ENCODE measurements at regions of chr5 and their contacts with region 1.

Region 1: DNA sequence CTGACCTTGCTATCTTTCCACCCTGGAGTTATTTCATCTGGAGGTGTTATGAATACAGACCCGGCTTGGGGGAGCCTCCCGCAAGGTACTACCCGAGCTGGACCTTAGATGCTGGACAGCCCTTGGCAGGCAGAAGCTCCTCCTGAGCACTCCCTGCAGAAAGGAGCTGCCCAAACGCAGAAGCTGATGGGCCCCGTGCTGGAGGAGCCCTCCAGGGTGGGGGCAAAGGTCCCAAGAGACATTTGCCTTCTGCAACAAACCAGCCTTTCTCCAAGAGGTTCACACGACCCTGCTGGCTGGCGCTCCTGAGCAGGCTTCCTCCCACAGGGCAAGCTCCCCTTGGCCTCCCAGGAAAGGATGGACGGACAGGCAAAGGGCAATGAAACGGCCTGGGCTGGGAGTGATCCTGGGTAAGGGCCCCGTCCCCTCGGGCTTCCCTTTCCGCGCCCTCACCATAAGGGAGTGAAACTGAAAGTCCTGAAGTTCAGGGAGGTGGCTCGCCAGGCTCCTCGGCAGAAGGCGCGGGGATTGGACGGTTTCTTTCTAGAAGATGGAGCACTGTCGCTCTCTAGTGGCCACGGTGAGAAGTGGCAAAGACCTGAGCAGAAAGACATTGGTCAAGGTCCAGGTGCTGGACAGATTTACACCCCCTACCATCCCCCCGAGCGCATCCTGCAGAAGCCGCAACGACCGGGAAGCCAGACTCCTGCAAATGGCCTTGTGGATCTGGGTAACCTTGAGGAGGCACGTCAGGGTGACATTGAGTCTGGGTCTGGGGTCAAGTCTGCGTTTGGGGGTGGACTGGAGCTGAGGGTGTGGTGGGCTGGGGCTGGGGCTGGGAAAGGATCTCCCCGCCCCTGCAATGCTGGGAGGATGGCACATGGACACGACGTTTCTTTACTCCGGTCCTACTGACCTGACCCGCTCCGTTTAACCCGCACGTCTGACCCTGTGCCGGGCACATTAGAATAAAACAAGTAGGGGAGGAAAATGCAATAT is 56.4 kb downstream of the NEURL1B start:
- DNase-seq: peak; percentile 94
- H3K4me3 Mint-ChIP-seq: peak overlapping the region; percentile 82
- H3K27ac Mint-ChIP-seq: peak overlapping the region; percentile 82
- H3K4me1 Mint-ChIP-seq: peaks cover 17% of the 10 kb centered on the region
- H3K27me3 Mint-ChIP-seq: peaks cover 14% of the 10 kb centered on the region
- CTCF ChIP-seq: peak; percentile 99

Region 2: DNA sequence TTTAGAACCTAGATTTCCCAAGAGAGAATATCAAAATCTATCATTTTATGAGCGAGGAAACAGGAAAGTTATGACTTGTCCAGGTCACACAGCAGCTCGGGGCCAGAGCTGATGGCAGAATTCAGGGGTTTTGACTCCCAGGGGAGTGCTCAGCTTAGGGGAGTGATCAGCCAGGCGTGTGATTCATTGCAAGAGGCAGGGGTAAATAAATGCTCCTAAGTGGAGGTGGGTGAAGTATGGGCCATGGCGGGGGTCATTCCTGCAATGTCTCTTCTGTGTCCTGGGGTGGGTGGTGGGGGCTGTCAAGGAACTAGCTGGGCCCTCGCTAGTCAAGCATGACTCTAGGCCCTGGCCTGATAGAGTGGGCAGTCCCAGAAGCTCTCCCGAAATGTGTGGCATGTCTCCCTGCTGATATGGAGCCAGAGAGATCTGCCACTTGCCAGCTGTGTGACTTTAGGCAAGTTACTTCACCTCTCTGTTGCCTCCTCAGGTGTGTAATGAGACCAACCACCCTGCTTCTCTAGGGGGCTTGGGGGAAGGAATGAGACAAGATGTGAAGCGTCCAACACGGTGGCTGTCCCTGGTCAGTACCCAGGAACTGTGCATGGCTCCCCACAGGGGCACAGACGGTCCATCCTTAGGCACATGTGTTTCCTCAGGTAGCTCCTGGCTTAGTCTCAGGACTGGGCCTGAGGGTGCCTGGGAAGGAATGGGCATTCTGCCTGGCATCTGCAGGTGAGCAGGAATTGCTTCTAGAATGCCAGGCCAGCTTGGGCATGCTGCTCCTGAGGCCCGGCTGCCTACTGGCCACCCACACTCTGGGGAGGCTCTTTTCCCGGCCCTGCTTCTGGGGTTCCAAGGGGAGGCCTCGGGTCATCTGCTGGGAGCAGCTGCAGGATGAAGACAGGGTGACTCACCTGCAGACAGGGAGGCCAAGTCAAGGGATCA is 206.6 kb before region 1 on chr5:
- CTCF ChIA-PET with region 1: interaction called, 22 read pairs
- POLR2A ChIA-PET with region 1: interaction called, 7 read pairs
- intact Hi-C with region 1: no loop called
- DNase-seq: peak; percentile 68
- H3K4me3 Mint-ChIP-seq: no peak overlapping the region
- H3K27ac Mint-ChIP-seq: no peak overlapping the region
- H3K4me1 Mint-ChIP-seq: no peaks in the 10 kb centered on the region
- H3K27me3 Mint-ChIP-seq: peaks cover 19% of the 10 kb centered on the region
- CTCF ChIP-seq: no peak

Region 3: DNA sequence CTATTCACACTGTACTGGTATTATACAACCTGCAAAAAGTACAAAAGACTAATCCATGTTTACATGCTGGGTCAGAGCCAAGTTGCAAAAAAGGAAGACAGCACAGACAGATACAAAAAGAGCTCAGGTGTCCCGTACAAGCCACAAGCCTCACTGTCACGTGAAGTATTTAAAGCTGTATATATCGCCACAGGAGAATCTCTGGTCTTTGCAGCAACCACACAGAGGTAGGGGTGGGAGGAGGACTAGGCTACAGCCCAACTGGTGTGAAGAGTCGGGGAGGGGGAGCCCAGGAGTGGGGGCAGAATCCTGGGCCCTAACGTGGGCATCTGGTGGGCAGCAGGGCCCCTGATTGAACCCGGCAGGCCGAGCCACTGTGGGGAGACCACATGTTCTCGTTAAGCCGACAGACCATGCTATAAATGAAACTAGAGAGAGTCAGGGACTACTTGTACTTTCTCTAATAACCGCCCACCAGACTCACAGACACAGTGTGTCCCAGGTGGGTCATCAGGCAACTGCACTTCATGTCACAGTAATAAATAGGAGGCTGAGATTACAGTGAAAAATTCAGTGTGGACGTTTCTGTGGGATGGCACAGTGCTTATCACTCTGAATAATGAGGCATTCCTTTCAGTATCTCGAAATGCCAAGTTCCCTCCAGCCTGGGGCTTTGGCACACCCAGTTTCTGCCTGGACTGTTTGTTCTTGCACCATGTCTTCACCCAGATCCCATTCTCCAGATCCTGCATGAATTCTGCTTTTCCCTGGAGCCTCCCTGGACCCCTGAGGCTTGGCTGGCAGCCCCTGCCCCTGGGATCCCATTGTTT is 163.8 kb before region 1 on chr5:
- CTCF ChIA-PET with region 1: interaction called, 16 read pairs
- POLR2A ChIA-PET with region 1: interaction called, 6 read pairs
- intact Hi-C with region 1: no loop called
- DNase-seq: peak; percentile 86
- H3K4me3 Mint-ChIP-seq: peak overlapping the region; percentile 60
- H3K27ac Mint-ChIP-seq: peak overlapping the region; percentile 93
- H3K4me1 Mint-ChIP-seq: peaks cover 27% of the 10 kb centered on the region
- H3K27me3 Mint-ChIP-seq: no peaks in the 10 kb centered on the region
- CTCF ChIP-seq: no peak

Region 4: DNA sequence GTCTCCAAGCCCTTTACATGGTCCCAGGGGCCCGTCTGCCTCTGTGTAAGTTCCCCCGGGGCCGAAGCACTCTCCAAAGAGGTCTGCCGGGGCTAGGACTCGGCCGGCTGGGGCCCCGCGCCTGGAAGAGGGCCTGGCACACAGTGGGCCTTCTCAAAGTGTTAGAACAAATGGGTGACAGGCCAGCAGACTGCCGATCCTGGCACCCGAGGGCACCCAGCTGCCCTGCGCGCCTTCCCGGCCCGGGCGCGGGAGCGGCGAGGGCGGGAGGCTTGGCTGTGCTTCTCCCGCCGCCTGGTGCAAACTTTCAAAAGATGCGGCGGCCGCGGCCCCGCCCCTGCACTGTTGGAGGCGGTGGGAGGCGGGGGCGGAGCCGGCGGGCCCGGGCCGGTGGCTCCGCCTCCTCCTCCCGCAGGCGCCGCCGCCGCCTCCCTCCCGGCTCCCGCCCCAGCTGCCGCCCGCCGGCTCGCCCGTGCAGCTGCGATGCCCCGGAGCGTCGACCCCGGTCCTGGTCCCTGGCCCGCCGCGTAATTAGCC is 56.5 kb before region 1 on chr5 and contains the start of gene NEURL1B:
- CTCF ChIA-PET with region 1: interaction called, 49 read pairs
- POLR2A ChIA-PET with region 1: no interaction called
- intact Hi-C with region 1: loop called (anchors 1 kb)
- DNase-seq: peak; percentile 89
- H3K4me3 Mint-ChIP-seq: peak within 1 kb of the TSS; percentile 59
- H3K27ac Mint-ChIP-seq: no peak within 1 kb of the TSS
- H3K4me1 Mint-ChIP-seq: peaks cover 45% of the 10 kb centered on the region
- H3K27me3 Mint-ChIP-seq: no peaks in the 10 kb centered on the region
- CTCF ChIP-seq: no peak
- total RNA-seq, gene NEURL1B: 4.8 and 7.6 TPM in 2 replicates

Region 5: GRCh38 chr5:172672680-172673079 is 24.7 kb before region 1 on chr5:
- CTCF ChIA-PET with region 1: interaction called, 15 read pairs
- POLR2A ChIA-PET with region 1: no interaction called
- intact Hi-C with region 1: no loop called
- DNase-seq: no peak
- H3K4me3 Mint-ChIP-seq: no peak overlapping the region
- H3K27ac Mint-ChIP-seq: no peak overlapping the region
- H3K4me1 Mint-ChIP-seq: peaks cover 8% of the 10 kb centered on the region
- H3K27me3 Mint-ChIP-seq: no peaks in the 10 kb centered on the region
- CTCF ChIP-seq: no peak

Region 6: DNA sequence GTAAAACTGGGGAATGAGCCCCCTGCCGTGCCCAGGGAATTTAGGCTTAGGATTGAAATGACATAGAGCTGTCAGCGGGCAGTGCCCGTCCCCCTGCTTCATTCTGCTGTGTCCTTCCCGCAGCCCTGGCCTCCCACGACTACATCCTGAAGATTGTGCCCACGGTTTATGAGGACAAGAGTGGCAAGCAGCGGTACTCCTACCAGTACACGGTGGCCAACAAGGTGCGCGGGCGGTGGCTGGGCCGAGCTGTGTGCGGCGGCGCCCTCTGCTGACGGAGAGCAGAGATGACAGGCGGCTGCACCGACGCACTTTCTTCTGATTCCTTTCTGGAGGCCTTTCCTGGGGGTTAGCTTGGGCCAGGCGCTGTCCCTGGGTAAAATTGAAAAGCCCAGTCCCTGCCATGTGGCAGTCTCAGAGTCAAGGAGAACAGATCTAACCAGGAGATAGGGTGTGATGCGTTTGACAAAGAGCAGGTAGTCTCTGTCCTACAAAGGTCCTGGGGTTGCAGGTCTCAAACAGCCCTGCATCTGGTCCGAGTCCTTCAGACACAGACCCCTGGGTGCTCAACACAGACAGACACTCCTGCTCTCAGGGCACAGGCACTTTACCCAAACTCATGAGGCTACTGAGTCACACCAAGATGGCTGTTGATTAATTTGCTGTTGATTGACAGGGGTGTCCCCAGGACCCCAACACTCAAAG is 235.0 kb after region 1 on chr5:
- CTCF ChIA-PET with region 1: interaction called, 10 read pairs
- POLR2A ChIA-PET with region 1: interaction called, 3 read pairs
- intact Hi-C with region 1: no loop called
- DNase-seq: peak; percentile 82
- H3K4me3 Mint-ChIP-seq: peak overlapping the region; percentile 28
- H3K27ac Mint-ChIP-seq: peak overlapping the region; percentile 90
- H3K4me1 Mint-ChIP-seq: peaks cover 28% of the 10 kb centered on the region
- H3K27me3 Mint-ChIP-seq: no peaks in the 10 kb centered on the region
- CTCF ChIP-seq: peak; percentile 100

Region 7: GRCh38 chr5:173035904-173036707 is 338.7 kb after region 1 on chr5:
- CTCF ChIA-PET with region 1: no interaction called
- POLR2A ChIA-PET with region 1: no interaction called
- intact Hi-C with region 1: no loop called
- DNase-seq: peak; percentile 43
- H3K4me3 Mint-ChIP-seq: no peak overlapping the region
- H3K27ac Mint-ChIP-seq: peak overlapping the region; percentile 65
- H3K4me1 Mint-ChIP-seq: peaks cover 11% of the 10 kb centered on the region
- H3K27me3 Mint-ChIP-seq: no peaks in the 10 kb centered on the region
- CTCF ChIP-seq: no peak